Activated CD4-positive, alpha-beta memory T cell treated with anti-CD3 and anti-CD28 coated beads for 36 hours (primary cell): ENCODE measurements at regions of chr14 and their contacts with region 1.

Region 1: GRCh38 chr14:101823511-101824120 is 62.1 kb downstream of the PPP2R5C start:
- DNase-seq: peak; percentile 90
- H3K4me3 Mint-ChIP-seq: peak overlapping the region; percentile 83
- H3K27ac Mint-ChIP-seq: peak overlapping the region; percentile 99
- H3K4me1 Mint-ChIP-seq: peaks cover 82% of the 10 kb centered on the region
- H3K27me3 Mint-ChIP-seq: no peaks in the 10 kb centered on the region

Region 2: DNA sequence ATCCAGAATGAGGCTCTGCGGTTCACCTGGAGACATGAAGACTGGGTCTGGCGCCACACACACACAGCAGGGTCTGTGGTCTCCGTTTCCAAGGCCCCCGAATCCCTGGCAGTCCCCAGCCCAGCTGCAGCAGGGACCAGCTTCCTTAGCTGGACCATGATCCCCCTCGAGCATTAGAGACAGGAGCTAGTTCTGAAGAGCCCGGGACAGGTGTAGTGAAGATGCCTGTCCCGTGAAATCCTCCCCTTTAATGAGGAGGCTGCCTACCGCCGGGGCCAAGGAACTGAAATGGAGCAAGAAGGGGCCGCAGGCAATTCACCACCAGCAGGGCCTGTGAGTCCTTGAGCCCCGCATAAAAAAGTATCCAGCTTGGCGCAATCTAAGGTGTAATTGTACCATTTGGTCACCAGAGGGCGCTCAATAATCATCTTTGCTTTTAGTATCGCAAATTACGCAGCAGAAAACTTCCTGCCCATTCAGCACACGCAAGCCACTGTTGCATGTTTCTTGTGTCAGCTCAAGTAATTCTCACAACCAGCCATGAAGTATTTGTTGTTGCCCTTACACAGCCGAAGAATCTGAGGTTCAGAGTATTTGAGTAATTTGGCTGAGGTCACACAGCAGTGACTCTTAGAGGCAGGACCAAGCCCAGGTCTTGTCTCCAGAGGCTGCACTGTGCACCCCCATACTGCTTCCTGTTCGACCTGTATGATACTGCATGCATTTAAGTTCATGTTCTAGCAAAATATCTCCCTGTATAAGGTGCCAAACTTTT is 116.4 kb before region 1 on chr14:
- CTCF ChIA-PET with region 1: interaction called, 6 read pairs
- POLR2A ChIA-PET with region 1: interaction called, 3 read pairs
- intact Hi-C with region 1: loop called (anchors 1 kb)
- DNase-seq: peak; percentile 65
- H3K4me3 Mint-ChIP-seq: peak overlapping the region; percentile 51
- H3K27ac Mint-ChIP-seq: peak overlapping the region; percentile 84
- H3K4me1 Mint-ChIP-seq: peaks cover 30% of the 10 kb centered on the region
- H3K27me3 Mint-ChIP-seq: no peaks in the 10 kb centered on the region

Region 3: DNA sequence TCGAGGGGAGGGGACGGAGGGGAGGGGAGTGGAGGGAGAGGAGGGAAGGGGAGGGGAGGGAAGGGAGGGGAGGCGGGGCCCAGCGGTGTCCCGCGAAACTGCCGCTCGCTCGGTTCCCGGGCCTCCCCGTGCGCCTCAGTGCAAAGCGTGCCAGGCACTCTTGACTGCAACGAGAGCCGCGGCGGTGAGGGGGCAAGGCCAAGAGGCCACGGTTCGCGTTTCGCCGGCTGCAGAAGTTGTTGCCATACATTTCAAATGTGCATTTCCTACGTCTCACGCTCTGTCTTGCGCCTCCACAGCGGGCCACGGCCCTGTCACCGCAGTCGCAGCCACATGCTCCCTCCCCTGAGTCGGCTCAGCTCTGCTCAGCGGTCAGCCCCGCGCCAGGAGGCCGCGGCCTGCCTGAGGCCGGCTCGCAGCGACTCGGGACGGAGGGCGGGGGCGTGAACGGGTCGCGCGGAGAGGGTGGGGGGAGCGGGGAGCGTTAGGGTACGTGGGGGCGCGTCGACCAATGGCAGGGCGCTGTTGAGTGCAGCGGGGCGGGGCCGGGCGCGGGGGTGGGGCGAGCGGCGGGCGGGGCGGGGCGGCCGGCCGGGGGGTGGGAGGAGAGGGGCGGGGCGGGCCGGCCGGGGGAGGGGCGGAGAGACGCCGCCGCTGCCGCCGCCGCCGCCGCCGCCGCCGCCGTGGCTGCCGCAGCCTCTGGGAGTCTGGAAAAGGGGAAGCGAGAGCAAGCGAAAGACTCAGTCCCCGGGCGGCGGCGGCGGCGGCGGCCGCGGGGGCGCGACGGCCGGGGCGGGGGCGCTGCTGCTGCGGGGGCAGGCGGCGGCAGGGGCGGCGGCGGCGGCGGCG is 62.4 kb before region 1 on chr14 and contains the start of gene PPP2R5C:
- CTCF ChIA-PET with region 1: interaction called, 4 read pairs
- POLR2A ChIA-PET with region 1: interaction called, 11 read pairs
- intact Hi-C with region 1: loop called (anchors 1 kb)
- DNase-seq: peak; percentile 91
- H3K4me3 Mint-ChIP-seq: peak within 1 kb of the TSS; percentile 87
- H3K27ac Mint-ChIP-seq: peak within 1 kb of the TSS; percentile 75
- H3K4me1 Mint-ChIP-seq: peaks cover 46% of the 10 kb centered on the region
- H3K27me3 Mint-ChIP-seq: no peaks in the 10 kb centered on the region
- total RNA-seq, gene PPP2R5C: 252 to 268 TPM

Region 4: GRCh38 chr14:101834800-101835547 is 11.4 kb after region 1 on chr14:
- CTCF ChIA-PET with region 1: interaction called, 10 read pairs
- POLR2A ChIA-PET with region 1: interaction called, 32 read pairs
- intact Hi-C with region 1: loop called (anchors 2 kb)
- DNase-seq: no peak
- H3K4me3 Mint-ChIP-seq: no peak overlapping the region
- H3K27ac Mint-ChIP-seq: peak overlapping the region; percentile 64
- H3K4me1 Mint-ChIP-seq: peaks cover 91% of the 10 kb centered on the region
- H3K27me3 Mint-ChIP-seq: no peaks in the 10 kb centered on the region

Region 5: GRCh38 chr14:101947906-101948665 is 124.5 kb after region 1 on chr14:
- CTCF ChIA-PET with region 1: no interaction called
- POLR2A ChIA-PET with region 1: interaction called, 4 read pairs
- intact Hi-C with region 1: loop called (anchors 2 kb)
- DNase-seq: peak; percentile 100
- H3K4me3 Mint-ChIP-seq: peak overlapping the region; percentile 92
- H3K27ac Mint-ChIP-seq: peak overlapping the region; percentile 95
- H3K4me1 Mint-ChIP-seq: peaks cover 15% of the 10 kb centered on the region
- H3K27me3 Mint-ChIP-seq: peaks cover 20% of the 10 kb centered on the region

Region 6: DNA sequence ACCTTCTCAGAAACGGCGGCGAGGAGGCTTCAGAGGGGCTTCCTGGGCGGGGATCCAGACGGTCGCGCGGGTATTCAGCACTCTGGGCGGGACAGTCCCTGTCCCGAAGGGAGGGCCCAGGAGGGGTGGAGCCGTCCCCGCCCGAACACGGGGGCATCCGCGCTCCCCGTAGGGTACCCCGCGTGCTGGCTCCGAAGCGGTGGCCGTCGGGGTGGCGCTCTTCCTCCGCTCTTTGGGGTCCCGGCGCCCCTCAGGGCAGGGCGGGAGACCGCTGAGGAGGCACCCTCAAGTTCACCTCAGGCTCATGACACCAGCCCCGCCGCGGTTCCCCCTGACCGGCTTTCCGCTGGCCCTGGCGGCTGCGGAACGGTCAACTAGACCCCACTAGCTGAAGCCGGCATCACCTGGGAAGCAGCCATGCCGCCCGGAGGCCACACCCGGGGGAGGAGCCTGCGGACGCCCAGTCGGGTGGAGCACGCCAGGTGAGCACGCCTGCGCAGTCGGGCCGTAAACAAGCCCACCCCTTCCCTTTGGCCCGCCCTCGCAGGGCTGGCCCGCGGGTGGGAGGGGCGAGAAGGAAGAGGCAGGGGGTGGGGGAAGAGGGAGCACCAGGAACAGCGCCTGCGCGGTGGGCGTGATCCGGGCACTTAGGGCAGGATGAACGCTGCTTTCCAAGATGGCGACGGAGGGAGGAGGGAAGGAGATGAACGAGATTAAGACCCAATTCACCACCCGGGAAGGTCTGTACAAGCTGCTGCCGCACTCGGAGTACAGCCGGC is 315.8 kb after region 1 on chr14 and contains the start of gene WDR20:
- CTCF ChIA-PET with region 1: interaction called, 3 read pairs
- POLR2A ChIA-PET with region 1: no interaction called
- intact Hi-C with region 1: loop called (anchors 5 kb)
- DNase-seq: peak; percentile 100
- H3K4me3 Mint-ChIP-seq: peak within 1 kb of the TSS; percentile 98
- H3K27ac Mint-ChIP-seq: peak within 1 kb of the TSS; percentile 94
- H3K4me1 Mint-ChIP-seq: peaks cover 20% of the 10 kb centered on the region
- H3K27me3 Mint-ChIP-seq: no peaks in the 10 kb centered on the region
- total RNA-seq, gene WDR20: 22.2 to 25.3 TPM